Activated CD4-positive, alpha-beta memory T cell treated with anti-CD3 and anti-CD28 coated beads for 36 hours (primary cell): ENCODE measurements at regions of chr11 and their contacts with region 1.

Region 1: DNA sequence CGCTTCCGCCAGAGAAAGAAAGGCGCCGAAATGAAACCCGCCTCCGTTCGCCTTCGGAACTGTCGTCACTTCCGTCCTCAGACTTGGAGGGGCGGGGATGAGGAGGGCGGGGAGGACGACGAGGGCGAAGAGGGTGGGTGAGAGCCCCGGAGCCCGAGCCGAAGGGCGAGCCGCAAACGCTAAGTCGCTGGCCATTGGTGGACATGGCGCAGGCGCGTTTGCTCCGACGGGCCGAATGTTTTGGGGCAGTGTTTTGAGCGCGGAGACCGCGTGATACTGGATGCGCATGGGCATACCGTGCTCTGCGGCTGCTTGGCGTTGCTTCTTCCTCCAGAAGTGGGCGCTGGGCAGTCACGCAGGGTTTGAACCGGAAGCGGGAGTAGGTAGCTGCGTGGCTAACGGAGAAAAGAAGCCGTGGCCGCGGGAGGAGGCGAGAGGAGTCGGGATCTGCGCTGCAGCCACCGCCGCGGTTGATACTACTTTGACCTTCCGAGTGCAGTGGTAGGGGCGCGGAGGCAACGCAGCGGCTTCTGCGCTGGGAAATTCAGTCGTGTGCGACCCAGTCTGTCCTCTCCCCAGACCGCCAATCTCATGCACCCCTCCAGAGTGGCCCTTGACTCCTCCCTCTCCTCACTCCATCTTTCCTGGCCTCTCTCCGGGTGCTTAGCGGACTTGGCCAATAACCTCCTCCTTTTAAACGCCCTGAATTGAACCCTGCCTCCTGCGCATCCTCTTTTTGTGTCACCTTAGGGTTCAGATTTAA is at the start of gene ATM:
- DNase-seq: peak; percentile 99
- H3K4me3 Mint-ChIP-seq: no peak within 1 kb of the TSS
- H3K27ac Mint-ChIP-seq: no peak within 1 kb of the TSS
- H3K4me1 Mint-ChIP-seq: peaks cover 49% of the 10 kb centered on the region
- H3K27me3 Mint-ChIP-seq: no peaks in the 10 kb centered on the region
- total RNA-seq, gene ATM: 31.3 to 31.6 TPM

Region 2: GRCh38 chr11:107840129-107840484 is 382.8 kb before region 1 on chr11:
- CTCF ChIA-PET with region 1: no interaction called
- POLR2A ChIA-PET with region 1: no interaction called
- intact Hi-C with region 1: loop called (anchors 5 kb)
- DNase-seq: no peak
- H3K4me3 Mint-ChIP-seq: peak overlapping the region; percentile 53
- H3K27ac Mint-ChIP-seq: peak overlapping the region; percentile 98
- H3K4me1 Mint-ChIP-seq: peaks cover 71% of the 10 kb centered on the region
- H3K27me3 Mint-ChIP-seq: no peaks in the 10 kb centered on the region

Region 3: DNA sequence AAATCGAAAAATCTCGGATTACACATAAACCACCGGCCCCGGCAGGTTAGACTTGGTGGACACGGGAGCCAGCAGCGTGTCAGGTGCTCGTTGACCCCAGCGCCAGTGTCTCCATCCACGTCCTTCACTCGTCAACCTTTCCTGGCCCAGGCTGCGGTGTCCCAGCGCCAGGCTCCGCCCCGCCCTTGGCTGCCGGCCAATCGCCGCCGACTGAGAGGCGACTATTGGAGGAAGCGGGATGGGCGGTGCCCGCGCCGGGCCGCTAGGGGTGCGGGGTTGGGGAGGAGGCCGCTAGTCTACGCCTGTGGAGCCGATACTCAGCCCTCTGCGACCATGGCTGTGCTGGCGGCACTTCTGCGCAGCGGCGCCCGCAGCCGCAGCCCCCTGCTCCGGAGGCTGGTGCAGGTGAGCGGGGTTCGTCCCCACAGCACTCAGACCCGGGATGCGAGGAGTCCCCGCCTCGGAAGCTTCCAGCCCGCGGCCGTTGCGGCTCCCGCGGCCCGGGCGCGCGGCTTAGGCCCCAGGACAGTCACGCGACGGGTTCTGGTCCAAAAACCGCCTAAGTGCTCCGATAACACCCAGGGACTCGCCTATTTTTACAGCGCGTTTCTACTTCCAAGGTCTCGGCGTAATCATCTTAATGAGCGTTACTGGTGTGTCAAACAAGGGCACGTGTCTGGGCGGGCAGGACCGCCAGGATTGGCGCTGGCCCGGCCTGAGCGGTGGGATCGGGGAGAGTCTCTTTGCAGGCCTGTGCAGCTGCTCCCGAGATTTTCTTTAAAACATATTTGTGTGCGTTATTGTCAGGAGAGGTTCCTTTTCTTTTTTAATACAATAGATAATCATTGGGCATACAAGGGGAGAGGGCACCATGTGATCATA is 101.4 kb before region 1 on chr11 and contains the start of gene ACAT1:
- CTCF ChIA-PET with region 1: interaction called, 4 read pairs
- POLR2A ChIA-PET with region 1: interaction called, 3 read pairs
- intact Hi-C with region 1: loop called (anchors 1 kb)
- DNase-seq: peak; percentile 98
- H3K4me3 Mint-ChIP-seq: peak within 1 kb of the TSS; percentile 87
- H3K27ac Mint-ChIP-seq: peak within 1 kb of the TSS; percentile 67
- H3K4me1 Mint-ChIP-seq: peaks cover 38% of the 10 kb centered on the region
- H3K27me3 Mint-ChIP-seq: no peaks in the 10 kb centered on the region
- total RNA-seq, gene ACAT1: 58.3 to 64.9 TPM

Region 4: DNA sequence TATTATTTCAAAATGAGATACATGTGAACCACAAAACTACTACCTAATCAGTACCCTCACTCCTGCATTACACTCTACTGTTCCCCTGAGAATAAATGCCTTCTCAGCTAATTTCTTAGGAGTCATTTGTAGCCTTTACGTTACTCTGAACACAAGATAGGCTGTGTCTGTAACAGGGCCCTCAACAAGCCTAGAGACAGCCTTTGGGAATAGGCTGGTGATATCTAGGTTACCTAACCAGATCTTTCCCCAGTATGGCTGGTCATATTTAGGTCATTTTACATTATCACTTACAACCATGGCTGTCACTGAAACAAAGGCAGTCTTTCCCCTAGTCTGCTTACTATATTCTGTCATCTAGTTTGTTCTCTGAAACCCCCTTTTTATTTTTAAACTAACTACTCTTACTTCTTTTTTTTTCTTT is 14.2 kb after region 1 on chr11:
- CTCF ChIA-PET with region 1: interaction called, 19 read pairs
- POLR2A ChIA-PET with region 1: interaction called, 62 read pairs
- intact Hi-C with region 1: loop called (anchors 1 kb)
- DNase-seq: no peak
- H3K4me3 Mint-ChIP-seq: peak overlapping the region; percentile 31
- H3K27ac Mint-ChIP-seq: peak overlapping the region; percentile 76
- H3K4me1 Mint-ChIP-seq: peaks cover 72% of the 10 kb centered on the region
- H3K27me3 Mint-ChIP-seq: no peaks in the 10 kb centered on the region

Region 5: DNA sequence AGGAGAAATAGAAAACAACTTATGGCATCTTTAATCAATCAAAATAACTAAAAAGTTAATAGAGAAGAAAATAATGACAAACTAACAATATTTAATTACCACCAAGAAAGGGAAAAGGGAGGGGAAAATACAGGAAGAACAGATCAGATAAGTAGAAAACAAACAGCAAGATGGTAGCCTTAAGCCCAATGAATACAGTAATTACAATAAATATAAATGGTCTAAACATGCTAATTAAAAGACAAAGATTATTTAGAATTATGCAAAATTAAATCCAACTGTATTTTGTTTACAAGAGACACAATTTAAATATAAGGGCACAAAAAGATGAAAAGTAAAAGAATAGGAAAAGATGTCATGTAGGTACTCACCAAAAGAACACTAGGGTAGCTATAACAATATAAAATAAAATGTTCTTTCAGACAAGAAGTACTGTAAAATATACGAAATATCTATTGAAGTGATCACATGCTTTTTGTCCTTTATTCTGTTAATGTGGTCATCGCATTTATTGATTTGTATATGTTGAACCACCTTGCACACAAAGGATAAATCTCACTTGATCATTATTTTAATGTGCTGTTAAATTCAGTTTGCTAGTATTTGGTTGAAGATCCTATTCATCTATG is 230.5 kb after region 1 on chr11:
- CTCF ChIA-PET with region 1: no interaction called
- POLR2A ChIA-PET with region 1: no interaction called
- intact Hi-C with region 1: no loop called
- DNase-seq: no peak
- H3K4me3 Mint-ChIP-seq: no peak overlapping the region
- H3K27ac Mint-ChIP-seq: no peak overlapping the region
- H3K4me1 Mint-ChIP-seq: no peaks in the 10 kb centered on the region
- H3K27me3 Mint-ChIP-seq: no peaks in the 10 kb centered on the region

Region 6: GRCh38 chr11:108497317-108498045 is 274.6 kb after region 1 on chr11:
- CTCF ChIA-PET with region 1: no interaction called
- POLR2A ChIA-PET with region 1: interaction called, 3 read pairs
- intact Hi-C with region 1: loop called (anchors 1 kb)
- DNase-seq: peak; percentile 87
- H3K4me3 Mint-ChIP-seq: peak overlapping the region; percentile 95
- H3K27ac Mint-ChIP-seq: peak overlapping the region; percentile 99
- H3K4me1 Mint-ChIP-seq: peaks cover 16% of the 10 kb centered on the region
- H3K27me3 Mint-ChIP-seq: no peaks in the 10 kb centered on the region

Region 7: GRCh38 chr11:108614086-108614485 is 391.2 kb after region 1 on chr11:
- CTCF ChIA-PET with region 1: no interaction called
- POLR2A ChIA-PET with region 1: no interaction called
- intact Hi-C with region 1: no loop called
- DNase-seq: no peak
- H3K4me3 Mint-ChIP-seq: no peak overlapping the region
- H3K27ac Mint-ChIP-seq: no peak overlapping the region
- H3K4me1 Mint-ChIP-seq: no peaks in the 10 kb centered on the region
- H3K27me3 Mint-ChIP-seq: peaks cover 12% of the 10 kb centered on the region

Region 8: GRCh38 chr11:108733479-108734116 is 510.7 kb after region 1 on chr11:
- CTCF ChIA-PET with region 1: no interaction called
- POLR2A ChIA-PET with region 1: no interaction called
- intact Hi-C with region 1: loop called (anchors 5 kb)
- DNase-seq: peak; percentile 71
- H3K4me3 Mint-ChIP-seq: peak overlapping the region; percentile 51
- H3K27ac Mint-ChIP-seq: peak overlapping the region; percentile 82
- H3K4me1 Mint-ChIP-seq: peaks cover 52% of the 10 kb centered on the region
- H3K27me3 Mint-ChIP-seq: no peaks in the 10 kb centered on the region